CD8-positive, alpha-beta T cell (primary cell): ENCODE measurements at regions of chr14 and their contacts with region 1.

Region 1: GRCh38 chr14:105490572-105491366 is at the start of gene TEDC1:
- DNase-seq: peak; percentile 98 to 100 (median 99)
- ATAC-seq: peak; percentile 67
- H3K4me3 ChIP-seq: peak within 1 kb of the TSS; percentile 59 to 84
- H3K4me3 Mint-ChIP-seq: peak within 1 kb of the TSS; percentile 84
- H3K27ac ChIP-seq: peak within 1 kb of the TSS; percentile 95 to 96
- H3K27ac Mint-ChIP-seq: peak within 1 kb of the TSS; percentile 96
- H3K4me1 ChIP-seq: peaks cover 39% of the 10 kb centered on the region
- H3K4me1 Mint-ChIP-seq: peaks cover 27% of the 10 kb centered on the region
- H3K27me3 ChIP-seq: no peaks in the 10 kb centered on the region
- H3K27me3 Mint-ChIP-seq: no peaks in the 10 kb centered on the region
- CTCF ChIP-seq: peak; percentile 84
- total RNA-seq, gene TEDC1: 55.3 to 58.5 TPM

Region 2: GRCh38 chr14:105180592-105181548 is 309.9 kb before region 1 on chr14 and contains the start of gene NUDT14:
- CTCF ChIA-PET with region 1: no interaction called
- POLR2A ChIA-PET with region 1: no interaction called
- intact Hi-C with region 1: loop called (anchors 2 to 5 kb)
- DNase-seq: peak; percentile 77 to 95 (median 86)
- ATAC-seq: peak; percentile 94
- H3K4me3 ChIP-seq: peak within 1 kb of the TSS; percentile 36 to 37
- H3K4me3 Mint-ChIP-seq: peak within 1 kb of the TSS; percentile 76
- H3K27ac ChIP-seq: no peak within 1 kb of the TSS
- H3K27ac Mint-ChIP-seq: no peak within 1 kb of the TSS
- H3K4me1 ChIP-seq: peaks cover 25% of the 10 kb centered on the region
- H3K4me1 Mint-ChIP-seq: peaks cover 16% of the 10 kb centered on the region
- H3K27me3 ChIP-seq: no peaks in the 10 kb centered on the region
- H3K27me3 Mint-ChIP-seq: no peaks in the 10 kb centered on the region
- CTCF ChIP-seq: no peak
- total RNA-seq, gene NUDT14: 5.7 to 6.2 TPM

Region 3: GRCh38 chr14:105314287-105315200 is 176.2 kb before region 1 on chr14 and contains the start of gene PACS2:
- CTCF ChIA-PET with region 1: interaction called, 4 read pairs
- POLR2A ChIA-PET with region 1: interaction called, 3 read pairs
- intact Hi-C with region 1: loop called in 1 of 2 experiments (anchors 1 kb)
- DNase-seq: peak; percentile 47 to 96 (median 76)
- ATAC-seq: peak; percentile 73
- H3K4me3 ChIP-seq: peak within 1 kb of the TSS; percentile 55 to 60
- H3K4me3 Mint-ChIP-seq: peak within 1 kb of the TSS; percentile 91
- H3K27ac ChIP-seq: peak within 1 kb of the TSS; percentile 24 to 52
- H3K27ac Mint-ChIP-seq: peak within 1 kb of the TSS; percentile 85
- H3K4me1 ChIP-seq: peaks cover 21% of the 10 kb centered on the region
- H3K4me1 Mint-ChIP-seq: peaks cover 24% of the 10 kb centered on the region
- H3K27me3 ChIP-seq: no peaks in the 10 kb centered on the region
- H3K27me3 Mint-ChIP-seq: no peaks in the 10 kb centered on the region
- CTCF ChIP-seq: no peak
- total RNA-seq, gene PACS2: 46.5 to 56.1 TPM

Region 4: GRCh38 chr14:105398044-105398725 is 92.6 kb before region 1 on chr14 and contains the start of gene TEX22:
- CTCF ChIA-PET with region 1: interaction called, 10 read pairs
- POLR2A ChIA-PET with region 1: no interaction called
- intact Hi-C with region 1: loop called (anchors 1 kb)
- DNase-seq: peak; percentile 73 to 97 (median 90)
- ATAC-seq: peak; percentile 90
- H3K4me3 ChIP-seq: peak within 1 kb of the TSS; percentile 63 to 76
- H3K4me3 Mint-ChIP-seq: peak within 1 kb of the TSS; percentile 79
- H3K27ac ChIP-seq: peak within 1 kb of the TSS; percentile 71
- H3K27ac Mint-ChIP-seq: peak within 1 kb of the TSS; percentile 78
- H3K4me1 ChIP-seq: peaks cover 22% of the 10 kb centered on the region
- H3K4me1 Mint-ChIP-seq: peaks cover 15% of the 10 kb centered on the region
- H3K27me3 ChIP-seq: no peaks in the 10 kb centered on the region
- H3K27me3 Mint-ChIP-seq: no peaks in the 10 kb centered on the region
- CTCF ChIP-seq: no peak
- total RNA-seq, gene TEX22: 1.1 TPM in 1 of 2 experiments, not detected in the other

Region 5: DNA sequence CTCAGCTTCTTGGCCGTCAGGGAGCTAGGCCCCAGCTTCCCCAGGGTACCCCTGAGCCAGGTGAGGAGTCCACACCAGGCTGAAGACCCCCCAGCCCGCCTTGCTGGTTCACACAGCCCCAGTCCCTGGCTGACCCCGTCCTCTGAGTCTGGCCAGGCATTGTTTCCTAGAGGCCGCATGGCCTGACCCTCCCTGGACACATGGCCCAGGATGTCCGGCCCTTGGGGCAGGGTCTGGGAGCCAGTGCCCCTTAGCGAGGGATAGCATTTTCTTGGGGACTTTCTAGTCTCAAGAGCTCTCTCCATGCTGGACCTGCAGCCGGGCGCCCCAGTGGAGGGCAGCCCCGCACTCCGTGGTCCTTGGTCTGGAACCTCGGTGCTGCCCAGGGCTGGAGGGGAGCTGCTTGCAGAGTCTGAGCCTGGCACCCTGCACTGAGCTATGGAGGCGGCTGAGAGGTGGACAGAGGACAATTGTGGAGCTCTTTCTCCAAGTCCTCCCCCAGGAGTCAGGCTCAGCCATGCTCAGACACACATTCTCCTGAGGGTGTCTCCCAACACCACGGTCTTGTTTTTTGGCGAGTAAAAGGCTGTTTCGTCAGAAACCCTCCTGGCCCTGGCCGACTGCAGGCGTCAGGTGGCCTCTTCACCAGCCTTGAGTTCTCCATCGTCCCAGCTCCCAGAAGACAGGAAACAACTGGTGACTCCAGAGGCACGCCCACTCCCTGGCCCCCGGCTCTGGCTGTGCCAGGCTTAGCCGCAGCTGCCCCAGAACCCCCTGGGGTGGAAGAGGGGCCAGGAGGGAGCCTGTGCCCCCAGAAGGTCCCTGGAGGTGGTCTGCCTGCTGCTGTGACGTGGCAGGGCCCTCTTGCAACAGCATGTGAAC is 33.8 kb before region 1 on chr14:
- CTCF ChIA-PET with region 1: interaction called, 15 read pairs
- POLR2A ChIA-PET with region 1: no interaction called
- intact Hi-C with region 1: no loop called
- DNase-seq: peak in 1 of 9 experiments; percentile 11
- ATAC-seq: no peak
- H3K4me3 ChIP-seq: no peak overlapping the region
- H3K4me3 Mint-ChIP-seq: no peak overlapping the region
- H3K27ac ChIP-seq: no peak overlapping the region
- H3K27ac Mint-ChIP-seq: no peak overlapping the region
- H3K4me1 ChIP-seq: no peaks in the 10 kb centered on the region
- H3K4me1 Mint-ChIP-seq: no peaks in the 10 kb centered on the region
- H3K27me3 ChIP-seq: no peaks in the 10 kb centered on the region
- H3K27me3 Mint-ChIP-seq: no peaks in the 10 kb centered on the region
- CTCF ChIP-seq: no peak